Left ventricle myocardium superior (tissue), 1 donor: ENCODE measurements at regions of chr13 and their contacts with region 1.

Region 1: GRCh38 chr13:37011788-37012187 is 11.2 kb downstream of the EXOSC8 start:
- DNase-seq: no peak
- ATAC-seq: no peak

Region 2: GRCh38 chr13:37023871-37024270 is 12.1 kb after region 1 on chr13:
- intact Hi-C with region 1: loop called (anchors 1 kb)
- DNase-seq: no peak
- ATAC-seq: no peak

Region 3: DNA sequence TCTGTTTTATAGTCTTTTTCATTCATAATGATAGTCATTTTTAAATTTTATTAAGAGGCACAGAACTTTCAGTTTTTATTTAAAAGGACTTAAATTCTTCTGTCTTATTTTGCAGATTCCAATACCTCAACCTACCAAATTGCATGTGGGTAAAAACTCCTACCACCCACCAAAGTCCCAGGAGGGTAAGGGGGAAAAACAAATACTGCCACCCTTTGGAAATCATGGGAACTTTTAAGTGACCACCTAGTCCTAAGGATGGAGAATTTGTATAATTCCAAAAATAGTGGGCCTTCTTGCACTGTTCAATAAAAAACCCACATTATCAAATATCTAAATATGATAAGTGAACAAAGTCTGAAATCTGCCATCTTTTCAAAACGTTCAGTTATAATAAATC is 38.0 kb after region 1 on chr13:
- intact Hi-C with region 1: loop called (anchors 5 kb)
- DNase-seq: no peak
- ATAC-seq: no peak